CD4-positive, alpha-beta memory T cell (primary cell): ENCODE measurements at regions of chr4 and their contacts with region 1.

Region 1: GRCh38 chr4:147707865-147708672 is 23.8 kb upstream of the ARHGAP10 start:
- DNase-seq: peak; percentile 51 to 62 (median 55)
- H3K4me3 ChIP-seq: no peak overlapping the region
- H3K4me3 Mint-ChIP-seq: no peak overlapping the region
- H3K27ac ChIP-seq: no peak overlapping the region
- H3K27ac Mint-ChIP-seq: peak overlapping the region in 1 of 7 donors; percentile 7
- H3K4me1 ChIP-seq: no peaks in the 10 kb centered on the region
- H3K4me1 Mint-ChIP-seq: peaks cover 0 to 3% (median under 1%) of the 10 kb centered on the region in 4 donors
- H3K27me3 ChIP-seq: no peaks in the 10 kb centered on the region
- H3K27me3 Mint-ChIP-seq: no peaks in the 10 kb centered on the region

Region 2: GRCh38 chr4:147518846-147519767 is 189.0 kb before region 1 on chr4:
- CTCF ChIA-PET with region 1: interaction called, 4 read pairs
- POLR2A ChIA-PET with region 1: no interaction called
- intact Hi-C with region 1: loop called (anchors 1 kb)
- DNase-seq: peak; percentile 32 to 47 (median 34)
- H3K4me3 ChIP-seq: no peak overlapping the region
- H3K4me3 Mint-ChIP-seq: no peak overlapping the region
- H3K27ac ChIP-seq: no peak overlapping the region
- H3K27ac Mint-ChIP-seq: no peak overlapping the region
- H3K4me1 ChIP-seq: no peaks in the 10 kb centered on the region
- H3K4me1 Mint-ChIP-seq: peaks cover 0 to 2% (median under 1%) of the 10 kb centered on the region in 4 donors
- H3K27me3 ChIP-seq: no peaks in the 10 kb centered on the region
- H3K27me3 Mint-ChIP-seq: peaks cover 2 to 8% of the 10 kb centered on the region in 2 donors

Region 3: DNA sequence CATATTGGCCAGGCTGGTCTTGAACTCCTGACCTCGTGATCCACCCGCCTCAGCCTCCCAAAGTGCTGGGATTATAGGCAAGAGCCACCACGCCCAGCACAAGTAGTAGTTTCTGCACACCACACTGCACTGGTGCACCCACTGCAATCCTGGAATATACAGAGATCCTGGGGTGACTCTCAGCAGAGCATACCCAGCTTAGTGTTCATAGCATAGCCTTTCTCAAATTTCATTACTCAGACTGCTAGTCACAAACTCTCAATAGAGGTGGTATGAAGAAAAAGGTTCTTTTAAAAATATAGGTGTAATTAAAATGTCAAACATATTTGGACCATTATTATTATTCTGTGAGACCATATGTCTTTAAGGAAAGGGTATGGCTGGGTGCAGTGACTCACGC is 17.6 kb after region 1 on chr4:
- CTCF ChIA-PET with region 1: interaction called, 13 read pairs
- POLR2A ChIA-PET with region 1: no interaction called
- intact Hi-C with region 1: no loop called
- DNase-seq: no peak
- H3K4me3 ChIP-seq: no peak overlapping the region
- H3K4me3 Mint-ChIP-seq: no peak overlapping the region
- H3K27ac ChIP-seq: no peak overlapping the region
- H3K27ac Mint-ChIP-seq: no peak overlapping the region
- H3K4me1 ChIP-seq: peaks cover 1% of the 10 kb centered on the region
- H3K4me1 Mint-ChIP-seq: peaks cover 0 to 6% (median 4%) of the 10 kb centered on the region in 4 donors
- H3K27me3 ChIP-seq: no peaks in the 10 kb centered on the region
- H3K27me3 Mint-ChIP-seq: no peaks in the 10 kb centered on the region

Region 4: GRCh38 chr4:147731580-147732517 is 23.8 kb after region 1 on chr4 and contains the start of gene ARHGAP10:
- CTCF ChIA-PET with region 1: interaction called, 17 read pairs
- POLR2A ChIA-PET with region 1: interaction called, 3 read pairs
- intact Hi-C with region 1: loop called (anchors 1 kb)
- DNase-seq: peak; percentile 57 to 79 (median 65)
- H3K4me3 ChIP-seq: peak within 1 kb of the TSS; percentile 76 to 84
- H3K4me3 Mint-ChIP-seq: peak within 1 kb of the TSS; percentile 90 to 97 (median 93)
- H3K27ac ChIP-seq: peak within 1 kb of the TSS; percentile 57
- H3K27ac Mint-ChIP-seq: peak within 1 kb of the TSS; percentile 91 to 97 (median 94)
- H3K4me1 ChIP-seq: peaks cover 26% of the 10 kb centered on the region
- H3K4me1 Mint-ChIP-seq: peaks cover 30 to 47% (median 42%) of the 10 kb centered on the region in 4 donors
- H3K27me3 ChIP-seq: no peaks in the 10 kb centered on the region
- H3K27me3 Mint-ChIP-seq: no peaks in the 10 kb centered on the region
- total RNA-seq, gene ARHGAP10: 8.2 to 8.3 TPM

Region 5: GRCh38 chr4:148015058-148015457 is 307.0 kb after region 1 on chr4:
- CTCF ChIA-PET with region 1: no interaction called
- POLR2A ChIA-PET with region 1: no interaction called
- intact Hi-C with region 1: no loop called
- DNase-seq: no peak
- H3K4me3 ChIP-seq: no peak overlapping the region
- H3K4me3 Mint-ChIP-seq: no peak overlapping the region
- H3K27ac ChIP-seq: no peak overlapping the region
- H3K27ac Mint-ChIP-seq: no peak overlapping the region
- H3K4me1 ChIP-seq: no peaks in the 10 kb centered on the region
- H3K4me1 Mint-ChIP-seq: peaks cover 0 to 4% (median 2%) of the 10 kb centered on the region in 4 donors
- H3K27me3 ChIP-seq: no peaks in the 10 kb centered on the region
- H3K27me3 Mint-ChIP-seq: no peaks in the 10 kb centered on the region

Region 6: DNA sequence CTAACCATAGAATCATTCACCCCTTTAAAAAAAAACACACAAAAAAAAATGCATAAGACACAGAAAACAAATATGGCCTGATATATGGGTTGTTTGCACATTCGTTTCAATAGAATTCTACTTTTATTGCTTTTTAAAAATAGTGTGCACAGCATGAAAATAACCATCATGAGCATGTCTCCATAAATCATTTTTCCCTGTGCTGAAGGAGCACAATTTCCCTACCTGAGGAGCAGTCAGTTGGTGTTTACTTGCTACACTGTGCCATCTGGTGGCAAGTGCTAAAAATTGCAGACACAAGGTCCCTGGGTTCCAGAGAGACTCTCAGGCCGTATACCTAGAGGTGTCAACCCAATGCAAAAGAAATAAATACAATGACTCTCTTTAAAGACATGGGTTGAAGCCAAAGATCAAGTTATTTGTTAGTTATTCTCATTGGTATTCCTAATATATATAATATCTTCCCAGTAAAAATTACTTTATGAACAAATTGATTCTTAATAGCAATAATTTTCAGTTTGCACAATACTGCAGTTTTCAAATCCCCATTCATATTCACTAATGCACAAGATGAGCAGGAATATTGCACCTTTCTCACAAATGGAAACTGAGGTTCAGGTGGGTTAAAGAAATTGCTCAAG is 1556.1 kb after region 1 on chr4:
- CTCF ChIA-PET with region 1: no interaction called
- POLR2A ChIA-PET with region 1: no interaction called
- intact Hi-C with region 1: loop called (anchors 10 kb)
- DNase-seq: peak in 3 of 5 donors; percentile 4 to 14 (median 8)
- H3K4me3 ChIP-seq: no peak overlapping the region
- H3K4me3 Mint-ChIP-seq: no peak overlapping the region
- H3K27ac ChIP-seq: no peak overlapping the region
- H3K27ac Mint-ChIP-seq: no peak overlapping the region
- H3K4me1 ChIP-seq: no peaks in the 10 kb centered on the region
- H3K4me1 Mint-ChIP-seq: no peaks in the 10 kb centered on the region
- H3K27me3 ChIP-seq: no peaks in the 10 kb centered on the region
- H3K27me3 Mint-ChIP-seq: peaks cover 0 to 1% of the 10 kb centered on the region in 2 donors